Common myeloid progenitor, CD34-positive (primary cell): ENCODE measurements at regions of chr10 and their contacts with region 1.

Region 1: DNA sequence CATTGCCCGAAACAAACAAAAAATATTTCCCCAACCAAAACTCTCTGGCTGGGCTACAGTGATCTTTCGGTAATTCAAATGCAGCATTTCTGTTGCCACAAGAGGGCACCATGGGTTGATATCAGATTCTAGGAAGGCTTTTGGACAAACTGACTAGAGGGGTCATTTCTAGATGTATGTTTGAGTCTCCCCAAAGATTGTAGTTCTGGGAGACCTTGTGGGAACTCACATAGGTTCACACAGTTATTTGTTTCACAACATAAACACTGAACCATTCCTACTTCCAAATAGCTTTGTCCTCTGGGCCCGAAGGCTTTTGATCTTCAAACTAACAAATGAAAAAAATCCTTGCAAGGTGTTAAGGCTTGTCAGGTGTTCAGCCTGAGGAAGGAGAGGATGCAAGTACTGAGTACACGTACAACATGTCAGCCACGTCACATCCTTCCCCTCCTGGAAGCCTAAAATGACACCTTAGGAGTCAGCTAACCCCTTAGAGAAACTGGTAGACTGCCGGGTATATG is 37.0 kb upstream of the IL15RA start:
- DNase-seq: peak; percentile 61 to 74 (median 66)
- H3K4me3 ChIP-seq: peak overlapping the region in 1 of 7 experiments; percentile 10
- H3K27ac ChIP-seq: no peak overlapping the region
- H3K4me1 ChIP-seq: peaks cover 0 to 10% (median 6%) of the 10 kb centered on the region in 4 experiments
- H3K27me3 ChIP-seq: no peaks in the 10 kb centered on the region

Region 2: DNA sequence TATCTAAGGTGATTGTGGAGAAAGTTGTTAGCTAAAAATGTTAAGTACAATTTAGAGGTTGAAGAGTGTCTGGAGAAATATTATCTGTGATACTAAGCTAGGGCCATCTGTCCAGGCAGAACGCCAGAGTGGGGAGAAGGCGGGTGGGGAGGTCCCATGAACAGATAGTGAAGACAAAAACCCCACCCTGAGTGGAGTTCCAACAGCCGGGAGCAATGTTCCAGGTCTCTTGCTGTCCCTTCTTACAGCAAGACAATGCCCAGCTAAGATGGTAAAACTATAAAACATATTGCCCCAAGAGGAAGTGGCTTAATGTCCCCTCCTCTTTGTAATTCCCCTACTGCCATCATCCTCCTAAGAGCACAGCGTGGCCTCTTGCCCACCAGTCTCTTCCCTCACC is 26.6 kb before region 1 on chr10:
- CTCF ChIA-PET with region 1: interaction called, 10 read pairs
- POLR2A ChIA-PET with region 1: no interaction called
- DNase-seq: peak in 2 of 3 donors; percentile 32 to 45
- H3K4me3 ChIP-seq: no peak overlapping the region
- H3K27ac ChIP-seq: no peak overlapping the region
- H3K4me1 ChIP-seq: peaks cover 0 to 6% (median 2%) of the 10 kb centered on the region in 4 experiments
- H3K27me3 ChIP-seq: no peaks in the 10 kb centered on the region

Region 3: DNA sequence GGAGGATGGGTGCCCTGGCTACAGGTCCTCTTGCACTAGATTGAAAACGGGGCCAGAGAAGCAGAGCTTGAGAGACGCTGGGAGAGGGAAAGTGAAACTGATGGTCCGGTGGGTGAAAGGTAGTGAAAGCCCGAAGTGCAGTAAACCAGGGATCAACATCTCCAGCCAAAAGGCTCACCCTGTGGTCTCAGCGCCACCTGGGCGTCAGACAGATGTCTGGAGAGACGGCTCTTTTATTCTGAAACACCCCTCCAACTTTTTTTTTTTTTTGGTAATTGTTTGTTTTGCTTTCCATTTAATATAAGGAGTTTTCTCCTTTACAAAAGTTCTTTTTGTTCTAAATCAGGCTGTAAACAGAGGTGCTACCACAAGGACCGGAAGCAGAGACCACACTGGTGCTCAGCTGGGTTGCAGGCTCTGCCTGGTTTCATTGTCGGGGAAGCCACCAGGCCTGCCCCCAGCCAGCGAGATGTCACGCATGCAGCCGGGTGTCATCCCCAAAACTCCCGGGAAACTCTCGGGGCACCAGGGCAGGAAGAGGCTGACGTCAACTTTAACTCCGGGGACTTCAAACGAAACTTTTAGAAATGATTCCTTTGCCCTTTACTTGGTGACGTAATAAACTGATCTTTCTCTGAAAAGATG is 36.6 kb after region 1 on chr10:
- CTCF ChIA-PET with region 1: interaction called, 77 read pairs
- POLR2A ChIA-PET with region 1: no interaction called
- DNase-seq: peak; percentile 84 to 97 (median 97)
- H3K4me3 ChIP-seq: peak overlapping the region; percentile 27 to 81 (median 55)
- H3K27ac ChIP-seq: peak overlapping the region; percentile 42 to 71
- H3K4me1 ChIP-seq: peaks cover 24 to 61% (median 55%) of the 10 kb centered on the region in 4 experiments
- H3K27me3 ChIP-seq: no peaks in the 10 kb centered on the region

Region 4: DNA sequence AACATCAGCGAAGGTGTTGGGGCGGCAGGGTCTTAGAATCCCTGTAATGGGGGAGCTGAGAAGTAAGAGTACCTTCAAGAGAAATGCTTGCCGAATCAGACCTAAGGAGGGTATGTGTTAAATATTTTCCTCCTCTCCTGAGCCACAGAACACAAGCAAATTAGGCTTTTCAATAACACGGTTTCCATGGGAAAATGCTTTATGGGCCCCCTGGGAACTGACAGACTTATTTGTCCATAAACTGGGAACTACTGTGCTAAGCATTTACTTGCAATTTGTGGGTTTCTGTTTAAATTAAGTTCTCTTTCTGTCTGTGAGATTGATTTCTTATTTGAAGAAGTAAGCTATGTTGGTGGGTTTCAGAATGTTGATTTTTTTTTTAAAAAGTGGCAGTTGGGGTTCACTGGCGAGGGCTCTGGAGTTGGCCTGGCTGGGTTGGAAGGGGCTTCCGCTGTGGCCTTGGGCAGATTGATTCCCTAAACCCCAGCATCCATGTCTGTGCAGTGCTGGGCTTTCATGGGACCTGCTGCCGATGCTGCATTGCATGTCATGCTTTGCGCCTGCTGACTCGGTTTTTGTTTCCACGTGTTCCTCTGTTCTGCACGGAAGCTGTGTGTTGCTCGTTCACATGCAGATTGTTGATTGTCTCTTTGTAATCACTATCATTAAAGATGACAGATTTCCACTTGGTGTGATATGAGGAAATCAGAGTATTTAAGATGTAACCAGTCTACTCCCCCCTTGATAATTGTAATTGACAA is 81.7 kb after region 1 on chr10:
- CTCF ChIA-PET with region 1: interaction called, 14 read pairs
- POLR2A ChIA-PET with region 1: no interaction called
- DNase-seq: no peak
- H3K4me3 ChIP-seq: no peak overlapping the region
- H3K27ac ChIP-seq: peak overlapping the region in 1 of 2 experiments; percentile 43
- H3K4me1 ChIP-seq: peaks cover 11 to 29% (median 25%) of the 10 kb centered on the region in 4 experiments
- H3K27me3 ChIP-seq: no peaks in the 10 kb centered on the region